PC-9 (cell line): ENCODE measurements at regions of chr7 and their contacts with region 1.

Region 1: DNA sequence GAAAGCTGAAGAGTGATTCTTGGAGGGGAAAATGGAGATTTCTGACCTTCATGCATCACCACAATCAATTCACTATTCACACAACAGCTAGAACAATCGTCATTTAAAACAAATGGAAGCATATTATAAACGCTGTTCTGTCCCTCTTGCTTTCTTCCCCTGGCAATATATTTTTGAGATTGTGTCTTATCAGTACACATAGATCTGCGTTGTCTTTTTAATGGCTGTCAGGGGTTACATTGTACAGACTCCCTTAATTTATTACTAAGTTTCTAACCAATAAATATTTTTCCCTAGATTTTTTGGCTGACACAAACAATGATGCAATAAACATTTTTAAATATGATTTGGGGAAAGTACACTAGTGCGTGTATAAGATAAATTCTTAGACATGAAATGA is 1115.7 kb upstream of the C7orf33 start:
- DNase-seq: no peak
- H3K4me3 ChIP-seq: no peak overlapping the region
- H3K27ac ChIP-seq: no peak overlapping the region
- H3K4me1 ChIP-seq: no peaks in the 10 kb centered on the region
- H3K27me3 ChIP-seq: 0 out of 2 replicates have a peak, but pooled peaks cover 5% of the 10 kb centered on the region
- CTCF ChIP-seq: no peak

Region 2: DNA sequence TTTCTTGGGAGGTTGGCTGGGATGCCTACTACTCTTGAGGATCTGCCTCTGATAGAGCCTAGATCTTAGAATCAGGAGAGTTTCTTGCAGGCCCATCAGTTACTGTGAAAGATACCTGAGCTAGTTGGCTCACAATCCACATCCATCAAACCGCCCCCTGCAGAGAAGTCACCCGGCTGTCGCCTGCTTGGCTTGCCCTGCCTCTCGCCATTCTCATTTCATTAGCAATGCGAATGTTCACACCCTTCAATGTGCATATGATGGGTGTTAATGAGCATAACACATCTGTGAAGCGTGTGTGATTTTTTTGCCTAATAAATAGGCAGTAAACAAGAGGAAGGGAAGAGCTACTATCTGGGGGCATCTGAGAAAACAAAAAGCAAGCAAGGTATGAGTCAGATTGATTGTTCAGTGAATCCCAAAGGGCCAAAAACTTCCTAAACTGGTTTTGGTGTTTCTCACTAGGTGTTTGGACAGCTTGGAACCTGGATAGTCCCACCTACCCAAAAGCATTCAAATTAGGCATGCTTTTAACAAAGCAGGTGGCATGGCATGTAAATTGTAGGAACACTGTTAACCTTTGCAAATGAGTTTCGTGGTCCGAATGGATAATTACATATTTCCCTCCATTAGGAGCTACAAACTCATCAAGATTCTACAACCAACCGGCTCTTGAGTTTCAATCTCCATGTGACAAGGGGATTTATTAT is 843.4 kb after region 1 on chr7:
- CTCF ChIA-PET with region 1: no interaction called
- POLR2A ChIA-PET with region 1: interaction called, 15 read pairs
- intact Hi-C with region 1: no loop called
- DNase-seq: no peak
- H3K4me3 ChIP-seq: no peak overlapping the region
- H3K27ac ChIP-seq: no peak overlapping the region
- H3K4me1 ChIP-seq: no peaks in the 10 kb centered on the region
- H3K27me3 ChIP-seq: peaks cover 35% of the 10 kb centered on the region
- CTCF ChIP-seq: no peak